ENCODE measurements at regions of chr6 and their contacts with region 1.

Region 1: GRCh38 chr6:45421709-45422502 is 44.2 kb upstream of the SUPT3H start:
- DNase-seq: peak; percentile 84
- H3K4me3 Mint-ChIP-seq: peak overlapping the region; percentile 94
- H3K27ac Mint-ChIP-seq: peak overlapping the region; percentile 98
- H3K4me1 Mint-ChIP-seq: peaks cover 44% of the 10 kb centered on the region
- H3K27me3 Mint-ChIP-seq: peaks cover 18% of the 10 kb centered on the region

Region 2: DNA sequence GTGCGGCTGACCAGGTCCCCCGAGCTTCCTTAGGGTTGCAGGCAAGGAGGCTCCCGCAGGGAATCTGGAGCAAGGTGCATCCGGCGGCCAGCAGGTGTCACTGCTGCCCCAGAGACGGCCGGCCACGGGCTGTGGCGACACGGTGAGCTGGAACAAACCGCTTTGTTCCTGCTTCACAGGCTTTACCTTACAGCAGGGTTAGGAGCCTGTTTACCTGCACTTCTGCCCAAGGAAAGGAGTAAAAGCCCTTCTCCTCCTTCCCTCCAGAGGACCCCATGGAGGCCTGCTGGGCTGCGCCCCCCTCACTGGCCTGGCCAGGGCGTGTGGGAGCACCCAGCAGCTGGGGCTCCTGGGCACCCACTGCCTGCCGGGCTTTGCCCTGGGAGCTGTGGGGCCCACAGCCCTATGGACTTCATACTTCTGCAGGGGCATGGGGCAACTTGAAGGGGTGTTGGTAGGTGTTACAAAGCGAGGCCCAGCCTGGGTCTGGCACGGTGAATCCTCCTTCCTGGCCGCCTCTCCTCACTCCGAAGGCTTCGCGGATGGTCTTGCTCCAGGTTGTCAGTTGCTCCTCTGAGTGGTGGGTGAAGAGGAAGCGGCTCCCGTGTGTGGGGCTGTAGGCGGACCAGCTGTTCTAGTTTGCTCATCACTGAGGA is 946.0 kb before region 1 on chr6:
- intact Hi-C with region 1: loop called (anchors 5 kb)
- DNase-seq: peak; percentile 93
- H3K4me3 Mint-ChIP-seq: no peak overlapping the region
- H3K27ac Mint-ChIP-seq: no peak overlapping the region
- H3K4me1 Mint-ChIP-seq: no peaks in the 10 kb centered on the region
- H3K27me3 Mint-ChIP-seq: peaks cover 13% of the 10 kb centered on the region

Region 3: GRCh38 chr6:44655412-44656342 is 766.2 kb before region 1 on chr6:
- intact Hi-C with region 1: loop called (anchors 1 kb)
- DNase-seq: peak; percentile 92
- H3K4me3 Mint-ChIP-seq: peak overlapping the region; percentile 51
- H3K27ac Mint-ChIP-seq: peak overlapping the region; percentile 80
- H3K4me1 Mint-ChIP-seq: peaks cover 13% of the 10 kb centered on the region
- H3K27me3 Mint-ChIP-seq: peaks cover 2% of the 10 kb centered on the region

Region 4: GRCh38 chr6:45001663-45002062 is 420.2 kb before region 1 on chr6:
- intact Hi-C with region 1: no loop called
- DNase-seq: peak; percentile 78
- H3K4me3 Mint-ChIP-seq: peak overlapping the region; percentile 39
- H3K27ac Mint-ChIP-seq: peak overlapping the region; percentile 84
- H3K4me1 Mint-ChIP-seq: peaks cover 29% of the 10 kb centered on the region
- H3K27me3 Mint-ChIP-seq: no peaks in the 10 kb centered on the region

Region 5: GRCh38 chr6:45377554-45378333 is 44.2 kb before region 1 on chr6 and contains the start of gene SUPT3H:
- intact Hi-C with region 1: loop called (anchors 1 kb)
- DNase-seq: peak; percentile 97
- H3K4me3 Mint-ChIP-seq: peak within 1 kb of the TSS; percentile 99
- H3K27ac Mint-ChIP-seq: peak within 1 kb of the TSS; percentile 100
- H3K4me1 Mint-ChIP-seq: peaks cover 25% of the 10 kb centered on the region
- H3K27me3 Mint-ChIP-seq: no peaks in the 10 kb centered on the region
- total RNA-seq, gene SUPT3H: 12.4 and 13.0 TPM in 2 replicates

Region 6: GRCh38 chr6:45454008-45454911 is 32.4 kb after region 1 on chr6:
- intact Hi-C with region 1: no loop called
- DNase-seq: no peak
- H3K4me3 Mint-ChIP-seq: no peak overlapping the region
- H3K27ac Mint-ChIP-seq: no peak overlapping the region
- H3K4me1 Mint-ChIP-seq: peaks cover 39% of the 10 kb centered on the region
- H3K27me3 Mint-ChIP-seq: no peaks in the 10 kb centered on the region

Region 7: DNA sequence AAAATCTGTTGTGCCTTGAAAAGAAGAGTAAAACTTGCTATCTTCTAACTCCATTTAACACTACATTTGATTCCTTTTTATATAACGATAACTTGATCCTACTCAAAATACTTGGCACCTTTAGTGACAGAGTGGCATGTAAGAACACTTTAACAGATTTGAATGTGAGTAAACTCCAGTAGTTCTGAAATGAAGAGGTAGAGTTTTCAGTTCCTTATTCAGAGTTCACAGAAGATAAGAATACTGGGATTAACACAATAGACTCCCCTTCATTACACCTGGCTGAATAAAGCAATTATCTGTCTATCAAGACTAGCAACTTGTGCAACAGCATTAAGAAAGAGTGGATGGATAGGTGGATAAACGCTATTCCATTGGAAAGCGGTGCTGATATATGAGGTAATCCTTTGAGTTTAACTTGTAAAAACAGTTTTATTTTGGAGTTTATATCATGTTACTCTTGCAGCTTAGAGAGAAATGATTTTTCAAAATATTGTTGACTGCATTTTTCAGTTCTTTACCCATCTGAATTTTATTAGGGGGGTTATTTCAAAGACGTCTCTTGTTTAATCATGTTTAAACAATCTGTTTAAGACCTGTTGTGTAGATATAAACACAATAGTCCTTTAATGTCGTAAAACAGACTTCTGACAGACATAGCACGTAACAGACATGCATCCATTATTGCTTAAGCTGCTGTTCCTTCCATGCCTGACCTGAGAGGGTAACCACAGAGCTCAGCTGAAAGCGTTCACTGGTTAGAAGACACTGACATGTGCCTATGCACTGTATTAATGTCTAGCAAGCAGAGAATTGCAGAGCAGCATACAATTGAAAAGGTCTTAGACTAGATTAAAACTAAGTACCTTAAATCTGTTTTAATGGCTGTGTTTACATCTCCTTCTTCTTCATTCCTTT is 58.2 kb after region 1 on chr6:
- intact Hi-C with region 1: loop called (anchors 2 kb)
- DNase-seq: no peak
- H3K4me3 Mint-ChIP-seq: no peak overlapping the region
- H3K27ac Mint-ChIP-seq: no peak overlapping the region
- H3K4me1 Mint-ChIP-seq: peaks cover 22% of the 10 kb centered on the region
- H3K27me3 Mint-ChIP-seq: no peaks in the 10 kb centered on the region

Region 8: DNA sequence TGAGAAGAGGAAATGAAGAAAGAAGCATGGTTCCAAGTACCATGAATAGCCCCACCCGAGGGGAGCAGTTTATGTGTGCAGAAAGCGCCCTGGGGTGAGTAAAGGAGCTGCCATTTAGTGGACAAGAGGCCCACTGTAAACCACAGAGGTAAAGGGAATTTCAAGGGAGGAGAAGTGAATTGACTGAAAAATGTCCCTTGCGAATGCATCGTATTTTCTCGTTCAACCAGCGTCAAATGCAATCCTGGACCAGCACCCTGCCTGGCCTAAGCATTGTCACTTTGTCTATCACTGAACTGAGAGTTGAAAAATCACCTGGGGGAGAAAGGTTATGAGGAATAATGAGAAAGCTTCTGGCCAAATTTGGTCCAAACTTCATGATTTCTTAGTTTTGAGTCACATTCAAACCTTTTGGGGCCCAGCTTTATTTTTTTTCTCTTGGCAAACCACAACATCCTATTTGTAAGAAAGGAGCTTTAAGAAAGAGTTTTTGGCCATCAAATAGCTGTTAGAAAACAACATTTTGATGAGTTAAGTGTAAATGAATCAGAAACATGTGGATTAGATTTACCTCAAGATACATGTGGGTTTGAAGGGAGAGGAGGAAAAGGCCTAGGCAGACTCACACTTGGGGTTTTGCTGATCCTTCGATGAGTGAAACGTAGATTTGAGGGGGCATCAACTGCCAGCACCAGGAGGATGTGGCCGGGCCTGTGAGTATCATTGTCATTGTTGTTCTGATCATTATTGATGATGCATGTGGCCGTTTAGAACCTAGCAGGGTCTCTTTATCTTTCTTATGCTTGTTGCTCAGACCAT is 379.8 kb after region 1 on chr6:
- intact Hi-C with region 1: loop called (anchors 2 kb)
- DNase-seq: peak; percentile 78
- H3K4me3 Mint-ChIP-seq: peak overlapping the region; percentile 28
- H3K27ac Mint-ChIP-seq: peak overlapping the region; percentile 86
- H3K4me1 Mint-ChIP-seq: peaks cover 21% of the 10 kb centered on the region
- H3K27me3 Mint-ChIP-seq: no peaks in the 10 kb centered on the region

Region 9: GRCh38 chr6:46011241-46012085 is 589.6 kb after region 1 on chr6:
- intact Hi-C with region 1: loop called (anchors 10 kb)
- DNase-seq: peak; percentile 91
- H3K4me3 Mint-ChIP-seq: peak overlapping the region; percentile 64
- H3K27ac Mint-ChIP-seq: peak overlapping the region; percentile 79
- H3K4me1 Mint-ChIP-seq: peaks cover 52% of the 10 kb centered on the region
- H3K27me3 Mint-ChIP-seq: peaks cover 9% of the 10 kb centered on the region